GM10248 (cell line): ENCODE measurements at regions of chr9 and their contacts with region 1.

Region 1: DNA sequence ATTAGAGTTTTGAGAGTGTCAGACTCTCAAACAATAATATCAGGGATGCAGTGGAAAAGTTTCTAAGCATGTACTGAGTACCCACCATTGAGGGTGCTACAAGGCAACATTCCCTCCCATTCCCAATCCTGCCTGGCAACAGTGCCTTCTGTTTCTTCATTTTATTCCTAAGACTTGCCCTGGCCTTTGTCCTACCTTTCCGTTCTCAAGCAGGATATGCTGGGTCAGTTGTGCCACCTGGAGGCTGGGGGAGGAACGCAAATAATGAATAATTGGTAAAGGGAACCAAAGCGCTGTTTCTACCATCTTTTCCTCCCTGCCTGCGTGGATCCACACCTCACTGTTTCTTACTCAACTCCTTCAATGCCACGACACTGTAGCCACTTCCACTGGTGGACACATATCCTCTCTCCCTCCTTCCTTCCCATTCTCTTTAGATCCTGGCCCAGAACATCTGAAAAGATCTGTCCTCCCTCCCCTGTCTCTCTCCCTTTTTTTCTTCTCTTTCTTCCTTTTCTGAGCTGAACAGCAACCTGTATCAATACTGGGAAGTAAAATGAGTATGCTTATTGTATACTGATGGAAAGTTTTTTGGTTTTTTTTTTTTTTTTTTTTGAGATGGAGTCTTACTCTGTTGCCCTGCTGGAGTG is 149.5 kb downstream of the C9orf152 start:
- DNase-seq: peak; percentile 53
- CTCF ChIP-seq: peak; percentile 64

Region 2: GRCh38 chr9:110069326-110070248 is 11.2 kb after region 1 on chr9:
- CTCF ChIA-PET with region 1: interaction called, 32 read pairs
- POLR2A ChIA-PET with region 1: no interaction called
- DNase-seq: no peak
- CTCF ChIP-seq: no peak